Body of pancreas (tissue), 4 donors: ENCODE measurements at regions of chr2 and their contacts with region 1.

Region 1: GRCh38 chr2:38602732-38603401 is at the start of gene HNRNPLL:
- DNase-seq: peak; percentile 98 to 100 (median 98)
- ATAC-seq: peak; percentile 92
- H3K4me3 ChIP-seq: peak within 1 kb of the TSS; percentile 68 to 97
- H3K27ac ChIP-seq: peak within 1 kb of the TSS; percentile 88 to 98 (median 92)
- H3K4me1 ChIP-seq: peaks cover 45% of the 10 kb centered on the region
- H3K27me3 ChIP-seq: no peaks in the 10 kb centered on the region
- CTCF ChIP-seq: no peak
- POLR2A ChIP-seq: peak; percentile 85 to 96 (median 95)
- total RNA-seq, gene HNRNPLL: 21.8 to 22.4 TPM

Region 2: GRCh38 chr2:38653715-38654527 is 51.1 kb after region 1 on chr2:
- intact Hi-C with region 1: loop called (anchors 10 kb)
- DNase-seq: no peak
- ATAC-seq: no peak
- H3K4me3 ChIP-seq: no peak overlapping the region
- H3K27ac ChIP-seq: no peak overlapping the region
- H3K4me1 ChIP-seq: peaks cover 10% of the 10 kb centered on the region
- H3K27me3 ChIP-seq: no peaks in the 10 kb centered on the region
- CTCF ChIP-seq: no peak
- POLR2A ChIP-seq: no peak